ENCODE measurements at regions of chr3 and their contacts with region 1.

Region 1: DNA sequence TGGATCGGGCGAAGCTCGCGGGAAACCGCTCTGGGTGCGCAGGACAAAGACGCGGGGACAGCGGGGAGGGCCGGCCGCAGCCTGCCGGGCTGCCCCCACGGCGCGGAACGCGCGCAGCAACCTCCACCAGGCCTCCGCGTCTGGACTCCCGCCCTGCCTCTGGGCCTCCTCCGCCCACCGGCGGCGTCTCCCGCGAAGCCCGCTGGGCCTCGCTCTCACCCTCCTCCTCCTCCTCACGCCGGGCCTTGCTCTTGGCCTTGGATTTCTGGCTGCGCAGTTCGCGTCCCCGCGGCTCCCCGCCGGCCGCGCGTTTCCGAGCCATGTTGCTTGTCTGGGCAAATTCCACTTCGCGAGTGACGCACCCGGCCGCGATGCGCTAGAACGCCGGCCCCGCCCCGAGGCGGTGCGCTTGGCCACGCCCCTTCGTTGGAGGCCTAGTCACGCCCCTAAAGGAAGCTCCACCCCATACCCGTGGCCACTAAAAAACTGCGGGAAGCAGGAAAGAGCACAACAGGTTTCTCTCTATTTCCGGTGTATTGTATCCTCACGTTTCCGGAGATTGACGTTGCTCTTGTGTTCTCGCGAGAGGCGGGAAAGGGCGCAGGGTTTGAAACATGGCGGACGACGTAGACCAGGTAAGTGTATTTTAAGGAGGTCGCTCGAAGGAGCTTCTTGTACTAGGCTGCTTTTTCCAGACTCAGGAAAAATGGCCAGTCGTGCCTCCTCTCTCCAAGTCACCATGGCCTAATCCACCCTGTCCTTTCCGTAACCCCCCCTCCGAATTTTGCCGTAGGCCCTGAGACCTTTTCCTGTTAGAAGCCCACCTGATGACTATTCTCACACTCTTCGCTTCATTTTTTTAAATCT is at the starts of genes LSM3 and XPC:
- DNase-seq: peak; percentile 100
- H3K4me3 Mint-ChIP-seq: peak within 1 kb of the TSS; percentile 87
- H3K27ac Mint-ChIP-seq: peak within 1 kb of the TSS; percentile 99
- H3K4me1 Mint-ChIP-seq: peaks cover 62% of the 10 kb centered on the region
- H3K27me3 Mint-ChIP-seq: no peaks in the 10 kb centered on the region
- total RNA-seq, gene LSM3: 17.4 and 18.0 TPM in 2 replicates
- total RNA-seq, gene XPC: 29.7 and 32.3 TPM in 2 replicates

Region 2: DNA sequence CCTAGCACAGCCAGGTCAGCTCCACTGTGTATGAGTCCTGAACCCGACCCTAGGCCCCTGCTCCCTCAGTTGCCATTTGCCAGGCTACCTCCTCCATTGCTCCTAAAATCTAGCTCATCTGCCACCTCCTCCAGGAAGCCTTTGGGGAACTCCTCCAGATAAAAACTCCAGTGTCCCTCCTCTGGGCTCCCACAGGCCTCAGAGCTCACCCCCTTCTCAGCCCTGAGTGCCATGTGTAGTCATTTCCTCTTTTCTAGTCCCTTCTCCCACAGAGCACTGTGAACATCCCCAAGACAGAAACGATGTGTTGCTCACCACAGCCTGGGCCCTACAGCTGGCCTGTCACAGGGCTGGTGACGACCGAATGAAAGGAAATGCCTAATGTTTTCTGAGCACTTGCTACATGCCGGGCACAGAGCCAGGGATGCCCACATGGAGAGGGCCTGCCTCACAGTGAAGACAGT is 1166.2 kb before region 1 on chr3:
- intact Hi-C with region 1: loop called (anchors 10 kb)
- DNase-seq: peak; percentile 85
- H3K4me3 Mint-ChIP-seq: peak overlapping the region; percentile 75
- H3K27ac Mint-ChIP-seq: peak overlapping the region; percentile 96
- H3K4me1 Mint-ChIP-seq: peaks cover 80% of the 10 kb centered on the region
- H3K27me3 Mint-ChIP-seq: no peaks in the 10 kb centered on the region

Region 3: GRCh38 chr3:14124615-14125190 is 53.8 kb before region 1 on chr3 and contains the starts of genes CHCHD4 and TMEM43:
- intact Hi-C with region 1: loop called (anchors 1 kb)
- DNase-seq: peak; percentile 99
- H3K4me3 Mint-ChIP-seq: peak within 1 kb of the TSS; percentile 98
- H3K27ac Mint-ChIP-seq: peak within 1 kb of the TSS; percentile 95
- H3K4me1 Mint-ChIP-seq: peaks cover 54% of the 10 kb centered on the region
- H3K27me3 Mint-ChIP-seq: no peaks in the 10 kb centered on the region
- total RNA-seq, gene CHCHD4: 27.7 and 29.6 TPM in 2 replicates
- total RNA-seq, gene TMEM43: 38.7 and 39.4 TPM in 2 replicates

Region 4: GRCh38 chr3:14402304-14402811 is 223.9 kb after region 1 on chr3 and contains the start of gene SLC6A6:
- intact Hi-C with region 1: loop called (anchors 10 kb)
- DNase-seq: peak; percentile 98
- H3K4me3 Mint-ChIP-seq: peak within 1 kb of the TSS; percentile 99
- H3K27ac Mint-ChIP-seq: peak within 1 kb of the TSS; percentile 97
- H3K4me1 Mint-ChIP-seq: peaks cover 43% of the 10 kb centered on the region
- H3K27me3 Mint-ChIP-seq: no peaks in the 10 kb centered on the region
- total RNA-seq, gene SLC6A6: 53.9 and 63.7 TPM in 2 replicates

Region 5: DNA sequence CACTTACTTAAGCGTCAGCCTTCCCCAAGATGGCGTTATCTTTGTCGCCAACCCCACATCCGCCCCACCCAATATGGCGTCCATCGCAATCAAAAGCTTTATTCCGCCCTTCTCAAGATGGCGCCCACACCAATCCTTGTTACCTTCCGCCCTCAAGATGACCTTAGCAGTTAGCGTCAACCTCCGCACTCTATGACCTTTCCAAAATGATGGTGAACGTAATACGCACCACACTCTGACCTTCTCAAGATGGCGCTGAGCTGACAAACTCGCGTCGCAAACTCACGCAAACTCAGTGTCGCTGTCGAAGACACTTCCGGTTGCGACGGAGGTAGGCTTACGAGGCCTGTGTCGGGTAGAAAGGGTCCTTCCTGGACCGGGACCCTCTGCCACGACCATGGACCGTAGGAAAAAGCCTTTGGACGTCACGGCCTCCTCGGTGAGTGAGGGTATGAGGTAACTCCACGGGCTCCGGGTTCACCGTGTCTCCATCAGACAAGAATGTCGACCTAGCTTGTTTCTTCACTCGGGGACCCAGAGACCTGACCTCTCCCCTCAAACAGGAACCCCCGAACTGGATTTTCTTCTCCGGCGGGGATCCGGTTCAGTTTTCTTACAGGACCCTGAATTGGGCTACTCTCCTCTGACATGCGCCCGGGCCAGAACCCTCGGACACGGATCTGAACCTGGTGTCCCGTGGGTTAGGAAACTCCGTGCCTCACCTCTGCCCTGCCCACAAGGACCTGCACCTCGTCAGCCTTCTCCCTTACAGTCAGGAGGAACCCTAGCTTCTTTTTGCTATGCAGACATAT is 473.2 kb after region 1 on chr3 and contains the start of gene CCDC174:
- intact Hi-C with region 1: loop called (anchors 1 kb)
- DNase-seq: peak; percentile 99
- H3K4me3 Mint-ChIP-seq: peak within 1 kb of the TSS; percentile 100
- H3K27ac Mint-ChIP-seq: peak within 1 kb of the TSS; percentile 95
- H3K4me1 Mint-ChIP-seq: peaks cover 38% of the 10 kb centered on the region
- H3K27me3 Mint-ChIP-seq: peaks cover 3% of the 10 kb centered on the region
- total RNA-seq, gene CCDC174: 16.0 and 16.8 TPM in 2 replicates

Region 6: DNA sequence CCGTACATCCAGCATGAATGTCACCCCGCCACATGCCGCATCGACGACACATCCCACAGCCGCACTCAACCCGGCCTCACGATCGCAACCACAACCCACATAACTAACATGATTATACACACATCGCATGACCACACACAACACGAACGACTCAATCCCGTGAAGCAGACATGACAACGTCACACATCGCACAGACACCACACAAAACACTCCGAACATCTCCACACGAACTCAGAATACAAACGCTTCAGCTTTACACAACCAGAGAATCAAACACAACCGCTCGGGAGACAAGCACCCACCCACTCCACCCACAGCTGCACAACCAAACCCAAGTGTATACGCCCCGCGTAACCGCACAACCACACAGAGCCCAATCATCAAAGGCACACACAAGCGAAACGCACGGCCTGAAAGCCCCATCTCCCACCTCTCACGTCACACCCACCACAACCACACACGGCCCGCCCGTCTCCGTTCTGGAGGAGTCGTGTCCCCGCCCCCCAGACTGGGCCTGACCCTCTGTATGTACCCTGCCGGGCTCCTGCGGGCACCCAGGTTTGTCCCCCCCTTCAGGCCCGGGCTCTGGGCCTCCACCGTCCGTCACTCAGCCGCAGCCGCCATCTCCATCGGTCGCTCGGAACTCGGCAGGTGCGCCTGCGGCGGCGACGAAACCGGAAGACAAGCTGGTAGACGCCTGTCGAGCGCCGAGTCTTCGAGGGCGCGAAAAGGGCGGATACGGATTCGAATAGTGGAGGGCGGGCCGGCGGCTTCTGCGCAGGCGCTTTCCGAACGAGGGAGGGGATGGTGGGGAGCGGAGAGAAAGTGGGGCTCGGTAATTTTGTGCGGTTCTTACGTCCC is 920.3 kb after region 1 on chr3 and contains the start of gene RBSN:
- intact Hi-C with region 1: loop called (anchors 2 kb)
- DNase-seq: peak; percentile 99
- H3K4me3 Mint-ChIP-seq: peak within 1 kb of the TSS; percentile 90
- H3K27ac Mint-ChIP-seq: peak within 1 kb of the TSS; percentile 93
- H3K4me1 Mint-ChIP-seq: peaks cover 29% of the 10 kb centered on the region
- H3K27me3 Mint-ChIP-seq: no peaks in the 10 kb centered on the region
- total RNA-seq, gene RBSN: 13.2 and 15.0 TPM in 2 replicates

Measured in activated CD4-positive, alpha-beta T cell treated with anti-CD3 and anti-CD28 coated beads, Interleukin-2, amount 10 ng/mL, durations not matched to agents 24 days and 14 days (primary cell).